ENCODE measurements at regions of chr4 and their contacts with region 1.

Region 1: GRCh38 chr4:15649914-15650545 is 5.1 kb downstream of the FBXL5 start:
- DNase-seq: peak; percentile 45
- ATAC-seq: peak; percentile 75
- H3K4me3 ChIP-seq: 0 out of 2 replicates have a peak overlapping the region, but pooled peaks have one; percentile 31
- H3K27ac ChIP-seq: no peak overlapping the region
- H3K4me1 ChIP-seq: peaks cover 25% of the 10 kb centered on the region
- H3K27me3 ChIP-seq: no peaks in the 10 kb centered on the region
- CTCF ChIP-seq: peak; percentile 63 to 80 (median 78)
- EP300 ChIP-seq: no peak
- POLR2A ChIP-seq: no peak
- RAD21 ChIP-seq: peak; percentile 87

Region 2: GRCh38 chr4:15238720-15239119 is 411.3 kb before region 1 on chr4:
- CTCF ChIA-PET with region 1: interaction called, 14 read pairs
- POLR2A ChIA-PET with region 1: no interaction called
- RAD21 ChIA-PET with region 1: interaction called, 4 read pairs
- SMC1A ChIA-PET with region 1: interaction called, 9 read pairs
- in situ Hi-C with region 1: loop called (anchors 5 kb)
- intact Hi-C with region 1: no loop called
- DNase-seq: no peak
- ATAC-seq: peak; percentile 83
- H3K4me3 ChIP-seq: no peak overlapping the region
- H3K27ac ChIP-seq: no peak overlapping the region
- H3K4me1 ChIP-seq: peaks cover 2% of the 10 kb centered on the region
- H3K27me3 ChIP-seq: no peaks in the 10 kb centered on the region
- CTCF ChIP-seq: peak; percentile 60 to 78 (median 60); a peak in 5 of 6 replicates
- EP300 ChIP-seq: no peak
- POLR2A ChIP-seq: no peak
- RAD21 ChIP-seq: peak; percentile 81

Region 3: GRCh38 chr4:15303052-15303641 is 346.9 kb before region 1 on chr4:
- CTCF ChIA-PET with region 1: no interaction called
- POLR2A ChIA-PET with region 1: no interaction called
- RAD21 ChIA-PET with region 1: no interaction called
- SMC1A ChIA-PET with region 1: no interaction called
- in situ Hi-C with region 1: no loop called
- intact Hi-C with region 1: no loop called
- DNase-seq: no peak
- ATAC-seq: no peak
- H3K4me3 ChIP-seq: no peak overlapping the region
- H3K27ac ChIP-seq: no peak overlapping the region
- H3K4me1 ChIP-seq: no peaks in the 10 kb centered on the region
- H3K27me3 ChIP-seq: no peaks in the 10 kb centered on the region
- CTCF ChIP-seq: no peak
- EP300 ChIP-seq: no peak
- POLR2A ChIP-seq: no peak
- RAD21 ChIP-seq: no peak

Region 4: GRCh38 chr4:15457406-15458201 is 192.4 kb before region 1 on chr4:
- CTCF ChIA-PET with region 1: interaction called, 19 read pairs
- POLR2A ChIA-PET with region 1: no interaction called
- RAD21 ChIA-PET with region 1: interaction called, 6 read pairs
- SMC1A ChIA-PET with region 1: interaction called, 5 read pairs
- in situ Hi-C with region 1: no loop called
- intact Hi-C with region 1: no loop called
- DNase-seq: peak; percentile 20
- ATAC-seq: peak; percentile 97
- H3K4me3 ChIP-seq: no peak overlapping the region
- H3K27ac ChIP-seq: no peak overlapping the region
- H3K4me1 ChIP-seq: no peaks in the 10 kb centered on the region
- H3K27me3 ChIP-seq: no peaks in the 10 kb centered on the region
- CTCF ChIP-seq: peak; percentile 66 to 71 (median 67)
- EP300 ChIP-seq: no peak
- POLR2A ChIP-seq: no peak
- RAD21 ChIP-seq: peak; percentile 67

Region 5: GRCh38 chr4:15536552-15537499 is 113.2 kb before region 1 on chr4:
- CTCF ChIA-PET with region 1: no interaction called
- POLR2A ChIA-PET with region 1: no interaction called
- RAD21 ChIA-PET with region 1: no interaction called
- SMC1A ChIA-PET with region 1: no interaction called
- in situ Hi-C with region 1: no loop called
- intact Hi-C with region 1: no loop called
- DNase-seq: no peak
- ATAC-seq: no peak
- H3K4me3 ChIP-seq: no peak overlapping the region
- H3K27ac ChIP-seq: no peak overlapping the region
- H3K4me1 ChIP-seq: no peaks in the 10 kb centered on the region
- H3K27me3 ChIP-seq: no peaks in the 10 kb centered on the region
- CTCF ChIP-seq: no peak
- EP300 ChIP-seq: no peak
- POLR2A ChIP-seq: no peak
- RAD21 ChIP-seq: no peak

Region 6: GRCh38 chr4:15636835-15637234 is 13.2 kb before region 1 on chr4:
- CTCF ChIA-PET with region 1: interaction called, 10 read pairs
- POLR2A ChIA-PET with region 1: interaction called, 3 read pairs
- RAD21 ChIA-PET with region 1: interaction called, 4 read pairs
- SMC1A ChIA-PET with region 1: interaction called, 8 read pairs
- in situ Hi-C with region 1: no loop called
- intact Hi-C with region 1: no loop called
- DNase-seq: no peak
- ATAC-seq: no peak
- H3K4me3 ChIP-seq: no peak overlapping the region
- H3K27ac ChIP-seq: no peak overlapping the region
- H3K4me1 ChIP-seq: no peaks in the 10 kb centered on the region
- H3K27me3 ChIP-seq: no peaks in the 10 kb centered on the region
- CTCF ChIP-seq: no peak
- EP300 ChIP-seq: no peak
- POLR2A ChIP-seq: no peak
- RAD21 ChIP-seq: no peak

Region 7: DNA sequence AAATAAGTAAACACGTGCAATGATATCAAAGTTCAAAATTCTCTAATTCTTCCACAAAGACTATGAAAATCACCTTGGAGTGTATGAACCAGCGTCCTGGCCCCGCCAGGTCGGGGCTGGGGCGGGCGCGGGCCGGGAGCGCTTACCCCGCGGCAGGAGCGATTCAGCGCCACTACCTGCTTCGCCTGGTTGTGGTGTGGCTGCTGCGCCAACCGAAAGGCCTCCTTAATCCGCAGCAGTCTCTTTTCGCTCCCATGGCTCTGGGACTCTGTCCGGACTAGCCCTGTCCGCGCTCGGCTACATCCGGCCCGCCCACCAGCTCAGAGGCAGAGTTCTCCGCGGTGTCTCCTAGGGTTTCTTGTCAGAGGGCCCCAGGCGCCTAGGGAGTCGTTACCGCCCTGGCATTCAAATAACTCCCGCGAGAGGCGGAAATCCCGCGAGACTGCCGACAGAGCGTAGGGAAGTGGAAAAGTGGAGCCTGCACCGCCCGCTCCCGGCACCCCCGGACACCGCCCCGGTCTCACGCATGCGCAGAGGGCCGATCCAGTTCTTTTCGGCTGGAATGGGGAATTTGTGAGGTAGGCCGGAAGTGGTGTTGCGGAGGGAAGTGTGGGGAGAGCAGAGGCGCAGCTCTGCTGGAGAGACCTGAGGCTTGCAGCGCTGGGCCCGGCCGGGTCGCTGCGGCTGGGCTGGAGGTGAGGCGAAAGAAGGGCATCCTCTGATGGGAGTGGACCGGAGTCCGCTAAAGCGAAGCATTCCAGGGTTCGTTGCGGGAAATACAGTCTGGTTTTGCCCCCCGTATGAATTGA is 31.4 kb after region 1 on chr4 and contains the start of gene FAM200B:
- CTCF ChIA-PET with region 1: interaction called, 23 read pairs
- POLR2A ChIA-PET with region 1: interaction called, 15 read pairs
- RAD21 ChIA-PET with region 1: interaction called, 15 read pairs
- SMC1A ChIA-PET with region 1: interaction called, 34 read pairs
- in situ Hi-C with region 1: no loop called
- intact Hi-C with region 1: loop called (anchors 1 kb)
- DNase-seq: peak; percentile 93
- ATAC-seq: peak; percentile 89
- H3K4me3 ChIP-seq: peak within 1 kb of the TSS; percentile 75
- H3K27ac ChIP-seq: peak within 1 kb of the TSS; percentile 94
- H3K4me1 ChIP-seq: peaks cover 9% of the 10 kb centered on the region; the same call in 1 of the 2 replicates
- H3K27me3 ChIP-seq: no peaks in the 10 kb centered on the region
- CTCF ChIP-seq: peak in 1 of 3 experiments; percentile 10; a peak in 1 of 6 replicates
- EP300 ChIP-seq: no peak
- POLR2A ChIP-seq: peak; percentile 89
- RAD21 ChIP-seq: no peak
- polyA plus RNA-seq, gene FAM200B: 24.4 to 27.0 TPM

Measured in GM12878 (cell line).